ENCODE measurements at regions of chr9 and their contacts with region 1.

Region 1: GRCh38 chr9:10562581-10563343 is 50.0 kb downstream of the PTPRD start:
- DNase-seq: no peak
- H3K4me3 Mint-ChIP-seq: no peak overlapping the region
- H3K27ac Mint-ChIP-seq: no peak overlapping the region
- H3K4me1 Mint-ChIP-seq: no peaks in the 10 kb centered on the region
- H3K27me3 Mint-ChIP-seq: no peaks in the 10 kb centered on the region

Region 2: DNA sequence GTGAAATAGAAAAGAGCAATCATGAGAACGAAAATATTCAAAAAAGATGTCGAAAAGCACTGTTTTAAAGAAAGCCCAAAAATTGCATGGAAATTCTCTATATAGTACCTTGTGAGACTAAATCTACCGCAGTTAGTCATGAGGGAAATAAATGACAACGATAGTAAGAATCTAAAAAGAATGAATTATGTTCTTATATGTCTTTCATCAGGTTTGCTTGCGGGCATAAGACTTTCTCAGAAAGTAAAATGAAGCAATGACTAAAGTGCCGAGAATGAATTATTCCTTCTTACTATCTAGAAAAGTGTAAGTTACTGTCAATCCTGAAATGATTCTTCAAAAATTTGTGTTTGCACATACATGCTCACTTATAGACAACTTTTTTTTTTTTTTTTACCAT is 23.6 kb after region 1 on chr9:
- CTCF ChIA-PET with region 1: no interaction called
- intact Hi-C with region 1: loop called (anchors 2 kb)
- DNase-seq: no peak
- H3K4me3 Mint-ChIP-seq: no peak overlapping the region
- H3K27ac Mint-ChIP-seq: no peak overlapping the region
- H3K4me1 Mint-ChIP-seq: no peaks in the 10 kb centered on the region
- H3K27me3 Mint-ChIP-seq: no peaks in the 10 kb centered on the region